ENCODE measurements at regions of chr9 and their contacts with region 1.

Region 1: DNA sequence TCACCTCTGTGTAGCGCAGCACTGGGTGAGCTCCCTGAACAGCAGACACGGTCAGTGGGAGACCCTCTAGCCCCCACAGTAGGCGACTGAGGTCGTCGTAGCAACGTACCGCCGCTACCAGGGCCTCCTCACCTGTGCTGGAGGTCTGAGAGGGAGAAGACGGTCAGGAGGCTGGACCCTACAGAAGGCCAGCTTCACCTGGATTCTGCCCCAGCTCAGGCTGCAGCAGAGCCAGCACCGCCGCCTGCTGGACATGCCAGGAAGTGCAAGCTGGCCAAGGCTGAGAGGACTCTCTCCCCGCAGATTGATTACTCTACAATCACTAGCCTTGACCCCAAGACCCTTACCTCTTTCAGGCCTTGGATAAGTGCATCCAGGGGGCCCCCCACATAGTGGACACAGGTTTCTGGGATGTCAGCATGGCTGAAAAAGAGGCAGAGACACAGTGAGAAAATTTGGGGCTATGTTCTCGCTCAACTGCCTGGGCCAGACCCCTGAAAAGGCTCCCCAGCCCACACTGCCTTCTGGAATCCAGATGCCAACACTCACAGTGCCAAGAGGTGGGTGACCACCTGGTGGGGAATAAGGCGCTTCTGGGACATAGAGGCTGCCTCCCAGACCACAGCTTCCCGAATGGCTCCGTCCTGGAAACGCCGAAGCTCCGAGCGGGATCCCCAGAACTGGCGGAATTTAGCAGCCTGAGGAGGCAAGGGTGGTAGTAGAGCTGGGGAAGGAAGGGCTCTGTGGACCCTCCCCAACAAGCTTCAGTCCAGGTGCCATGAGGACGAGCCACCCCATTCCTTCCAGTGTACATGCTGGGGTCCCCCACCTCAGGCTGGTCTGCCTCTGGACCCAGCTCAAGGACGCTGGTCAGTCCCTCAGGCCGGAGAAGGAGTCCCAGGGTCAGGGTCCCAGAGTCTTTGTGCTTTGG is 6.9 kb downstream of the NOL6 start:
- DNase-seq: peak; percentile 86
- H3K4me3 ChIP-seq: peak overlapping the region in 1 of 2 experiments; percentile 14; a peak in 1 of 4 replicates
- H3K27ac ChIP-seq: no peak overlapping the region
- H3K4me1 ChIP-seq: no peaks in the 10 kb centered on the region; a peak in 1 of 4 replicates
- H3K27me3 ChIP-seq: no peaks in the 10 kb centered on the region
- CTCF ChIP-seq: peak; percentile 90
- EP300 ChIP-seq: no peak
- RAD21 ChIP-seq: peak; percentile 75

Region 2: GRCh38 chr9:33265211-33265865 is 201.5 kb before region 1 on chr9:
- CTCF ChIA-PET with region 1: no interaction called
- POLR2A ChIA-PET with region 1: no interaction called
- DNase-seq: no peak
- H3K4me3 ChIP-seq: peak overlapping the region; percentile 56 to 97
- H3K27ac ChIP-seq: peak overlapping the region; percentile 56 to 58; a peak in 2 of 4 replicates
- H3K4me1 ChIP-seq: peaks cover 8 to 15% of the 10 kb centered on the region in 2 experiments; a peak in 3 of 4 replicates
- H3K27me3 ChIP-seq: no peaks in the 10 kb centered on the region
- CTCF ChIP-seq: no peak
- EP300 ChIP-seq: no peak
- RAD21 ChIP-seq: no peak

Region 3: GRCh38 chr9:33290247-33291030 is 176.4 kb before region 1 on chr9 and contains the start of gene NFX1:
- CTCF ChIA-PET with region 1: interaction called, 11 read pairs
- POLR2A ChIA-PET with region 1: no interaction called
- DNase-seq: peak; percentile 94
- H3K4me3 ChIP-seq: peak within 1 kb of the TSS; percentile 80 to 83
- H3K27ac ChIP-seq: peak within 1 kb of the TSS; percentile 94 to 98
- H3K4me1 ChIP-seq: peaks cover 0 to 11% of the 10 kb centered on the region in 2 experiments; a peak in 2 of 4 replicates
- H3K27me3 ChIP-seq: no peaks in the 10 kb centered on the region
- CTCF ChIP-seq: no peak
- EP300 ChIP-seq: peak in 1 of 2 experiments; percentile 53; a peak in 2 of 4 replicates
- RAD21 ChIP-seq: no peak
- polyA plus RNA-seq, gene NFX1: 19.6 and 27.6 TPM in 2 replicates

Region 4: DNA sequence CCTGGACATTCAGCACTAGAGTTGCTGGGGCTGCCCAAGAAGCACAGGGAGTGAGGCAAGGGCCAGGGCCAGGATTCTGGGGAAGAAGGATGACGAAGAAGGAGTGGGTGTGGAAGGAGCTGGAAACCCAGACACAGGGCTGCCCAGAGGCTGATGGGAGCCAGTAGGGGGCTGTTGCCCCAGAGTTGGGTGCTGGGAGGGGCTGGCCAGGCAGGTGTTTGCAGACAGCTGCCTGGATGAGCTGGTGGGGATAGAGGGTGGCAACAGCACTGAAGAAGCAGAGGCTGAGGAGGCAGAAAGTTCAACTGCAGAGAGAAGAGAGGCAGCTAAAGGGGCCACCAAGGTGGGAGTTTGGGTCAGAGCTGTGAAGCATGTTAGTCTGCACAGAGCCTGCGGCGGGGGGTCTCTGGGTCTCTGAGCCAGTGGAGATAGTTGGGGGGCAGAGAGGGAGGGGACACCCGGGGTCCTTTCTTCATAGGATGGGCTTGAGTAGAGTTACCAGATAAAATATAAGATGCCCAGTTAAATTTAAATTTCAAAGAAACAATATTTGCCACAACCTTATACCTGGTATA is 62.0 kb before region 1 on chr9:
- CTCF ChIA-PET with region 1: interaction called, 81 read pairs
- POLR2A ChIA-PET with region 1: interaction called, 3 read pairs
- DNase-seq: no peak
- H3K4me3 ChIP-seq: no peak overlapping the region
- H3K27ac ChIP-seq: no peak overlapping the region
- H3K4me1 ChIP-seq: no peaks in the 10 kb centered on the region
- H3K27me3 ChIP-seq: no peaks in the 10 kb centered on the region
- CTCF ChIP-seq: no peak
- EP300 ChIP-seq: no peak
- RAD21 ChIP-seq: no peak

Region 5: DNA sequence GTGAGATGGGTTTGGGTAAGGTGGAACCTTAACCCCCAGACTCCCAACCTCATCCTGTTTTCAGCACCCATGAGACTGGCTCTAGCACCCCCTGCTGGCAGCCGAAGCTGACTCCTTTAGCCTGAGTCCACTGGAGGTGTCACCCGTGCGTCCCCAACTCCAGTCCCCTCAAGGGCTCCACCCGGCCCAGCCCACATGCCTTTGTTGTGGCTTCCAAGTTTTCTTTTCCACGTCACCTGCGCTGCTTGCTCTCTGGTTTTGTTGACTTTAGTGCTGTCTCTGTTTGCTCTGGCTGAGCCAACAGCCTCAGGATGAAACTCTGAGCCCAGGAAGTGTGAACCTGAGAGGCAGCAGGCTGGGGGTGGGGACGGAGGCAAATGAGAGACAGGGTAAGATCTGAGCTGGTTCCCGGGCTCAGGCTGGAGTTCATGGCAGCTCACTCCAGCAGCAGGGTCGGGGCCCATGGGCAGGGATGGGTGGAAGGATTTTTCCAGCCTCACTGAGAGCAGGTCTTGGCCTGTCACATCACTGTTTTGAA is 51.3 kb before region 1 on chr9:
- CTCF ChIA-PET with region 1: interaction called, 12 read pairs
- POLR2A ChIA-PET with region 1: no interaction called
- DNase-seq: peak; percentile 76
- H3K4me3 ChIP-seq: no peak overlapping the region
- H3K27ac ChIP-seq: no peak overlapping the region
- H3K4me1 ChIP-seq: no peaks in the 10 kb centered on the region
- H3K27me3 ChIP-seq: no peaks in the 10 kb centered on the region
- CTCF ChIP-seq: peak; percentile 71
- EP300 ChIP-seq: no peak
- RAD21 ChIP-seq: peak; percentile 54

Region 6: GRCh38 chr9:33436440-33436839 is 30.4 kb before region 1 on chr9:
- CTCF ChIA-PET with region 1: interaction called, 11 read pairs
- POLR2A ChIA-PET with region 1: no interaction called
- DNase-seq: no peak
- H3K4me3 ChIP-seq: no peak overlapping the region
- H3K27ac ChIP-seq: no peak overlapping the region
- H3K4me1 ChIP-seq: no peaks in the 10 kb centered on the region
- H3K27me3 ChIP-seq: peaks cover 4% of the 10 kb centered on the region; the same call in 1 of the 2 replicates
- CTCF ChIP-seq: no peak
- EP300 ChIP-seq: no peak
- RAD21 ChIP-seq: no peak

Region 7: DNA sequence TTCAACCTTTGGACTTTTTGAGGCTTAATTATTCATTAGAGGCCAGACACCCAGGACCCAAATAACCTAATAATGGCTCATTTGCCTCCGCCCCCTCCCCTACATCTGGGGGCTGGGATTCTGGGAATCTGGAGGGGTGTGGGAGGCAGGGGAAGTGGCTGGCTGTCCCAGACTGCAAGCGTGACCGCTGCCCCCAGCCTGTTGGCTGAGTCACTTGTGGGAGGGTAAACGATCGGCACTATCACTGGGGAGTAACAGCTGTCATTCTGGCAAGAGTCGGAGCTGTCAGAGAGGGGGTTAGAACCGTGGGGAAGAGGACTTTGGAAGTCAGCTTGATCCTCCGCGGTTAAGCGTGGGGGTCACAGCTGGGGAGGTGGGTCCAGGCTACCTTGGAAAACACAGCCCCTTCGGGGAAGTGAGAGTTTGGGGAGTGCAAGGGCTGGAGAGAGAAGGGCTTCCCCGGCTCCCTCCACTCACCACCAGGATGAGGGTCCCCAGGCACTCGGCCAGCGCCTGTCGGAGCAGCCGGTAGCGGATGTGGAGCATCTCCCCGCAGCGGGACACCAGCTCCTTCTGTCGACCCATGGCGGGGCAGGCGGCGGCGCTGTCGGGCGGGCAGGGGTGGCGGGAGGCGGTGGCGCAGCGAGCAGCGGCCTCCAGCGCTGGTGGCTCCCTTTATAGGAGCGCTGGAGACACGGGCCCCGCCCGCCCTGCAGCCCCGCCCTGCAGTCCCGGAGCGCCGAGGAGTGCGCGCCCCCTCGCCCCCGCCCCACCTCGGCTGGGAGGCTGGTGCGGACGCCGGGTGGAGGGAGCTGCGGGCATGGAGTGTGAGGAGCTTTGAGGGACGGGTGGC is 19.7 kb before region 1 on chr9 and contains the start of gene AQP3:
- CTCF ChIA-PET with region 1: interaction called, 135 read pairs
- POLR2A ChIA-PET with region 1: interaction called, 3 read pairs
- DNase-seq: peak; percentile 88
- H3K4me3 ChIP-seq: peak within 1 kb of the TSS; percentile 37 to 48
- H3K27ac ChIP-seq: no peak within 1 kb of the TSS
- H3K4me1 ChIP-seq: peaks cover 0 to 17% of the 10 kb centered on the region in 2 experiments; a peak in 1 of 4 replicates
- H3K27me3 ChIP-seq: no peaks in the 10 kb centered on the region; the same call in 1 of the 2 replicates
- CTCF ChIP-seq: peak; percentile 15; the same call in 1 of the 2 replicates
- EP300 ChIP-seq: no peak
- RAD21 ChIP-seq: 0 out of 2 replicates have a peak, but pooled peaks have one; percentile 6
- polyA plus RNA-seq, gene AQP3: 0.52 and 0.64 TPM in 2 replicates

Region 8: GRCh38 chr9:33480087-33480486 is 13.3 kb after region 1 on chr9:
- CTCF ChIA-PET with region 1: interaction called, 14 read pairs
- POLR2A ChIA-PET with region 1: no interaction called
- DNase-seq: no peak
- H3K4me3 ChIP-seq: no peak overlapping the region
- H3K27ac ChIP-seq: no peak overlapping the region
- H3K4me1 ChIP-seq: no peaks in the 10 kb centered on the region
- H3K27me3 ChIP-seq: no peaks in the 10 kb centered on the region
- CTCF ChIP-seq: no peak
- EP300 ChIP-seq: no peak
- RAD21 ChIP-seq: no peak